ENCODE measurements at regions of chr11 and their contacts with region 1.

Region 1: GRCh38 chr11:36249246-36249645 is 40.0 kb downstream of the COMMD9 start:
- DNase-seq: no peak
- H3K4me3 Mint-ChIP-seq: no peak overlapping the region
- H3K27ac Mint-ChIP-seq: no peak overlapping the region
- H3K4me1 Mint-ChIP-seq: no peaks in the 10 kb centered on the region
- H3K27me3 Mint-ChIP-seq: peaks cover 29% of the 10 kb centered on the region

Region 2: DNA sequence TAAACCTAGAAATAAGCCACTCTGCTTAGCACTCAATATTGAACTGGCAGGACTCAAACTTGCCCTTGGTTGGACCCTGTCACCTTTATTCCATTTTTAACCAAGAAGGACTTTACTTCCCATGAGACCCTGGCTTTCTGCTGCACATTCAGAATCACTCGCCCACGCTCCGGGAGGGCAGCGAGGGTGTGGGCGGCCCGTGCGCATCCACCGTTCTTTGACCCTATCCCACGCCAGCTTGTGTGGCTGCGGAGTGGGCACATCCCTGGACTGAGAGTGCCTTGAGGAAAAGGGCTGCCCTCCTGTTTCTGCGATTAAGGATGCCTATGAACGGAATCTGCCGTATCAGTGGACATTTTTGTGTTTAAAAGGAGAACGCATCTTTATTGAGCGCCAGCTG is 547.1 kb before region 1 on chr11:
- CTCF ChIA-PET with region 1: no interaction called
- intact Hi-C with region 1: no loop called
- DNase-seq: no peak
- H3K4me3 Mint-ChIP-seq: no peak overlapping the region
- H3K27ac Mint-ChIP-seq: no peak overlapping the region
- H3K4me1 Mint-ChIP-seq: peaks cover 2% of the 10 kb centered on the region
- H3K27me3 Mint-ChIP-seq: no peaks in the 10 kb centered on the region

Region 3: DNA sequence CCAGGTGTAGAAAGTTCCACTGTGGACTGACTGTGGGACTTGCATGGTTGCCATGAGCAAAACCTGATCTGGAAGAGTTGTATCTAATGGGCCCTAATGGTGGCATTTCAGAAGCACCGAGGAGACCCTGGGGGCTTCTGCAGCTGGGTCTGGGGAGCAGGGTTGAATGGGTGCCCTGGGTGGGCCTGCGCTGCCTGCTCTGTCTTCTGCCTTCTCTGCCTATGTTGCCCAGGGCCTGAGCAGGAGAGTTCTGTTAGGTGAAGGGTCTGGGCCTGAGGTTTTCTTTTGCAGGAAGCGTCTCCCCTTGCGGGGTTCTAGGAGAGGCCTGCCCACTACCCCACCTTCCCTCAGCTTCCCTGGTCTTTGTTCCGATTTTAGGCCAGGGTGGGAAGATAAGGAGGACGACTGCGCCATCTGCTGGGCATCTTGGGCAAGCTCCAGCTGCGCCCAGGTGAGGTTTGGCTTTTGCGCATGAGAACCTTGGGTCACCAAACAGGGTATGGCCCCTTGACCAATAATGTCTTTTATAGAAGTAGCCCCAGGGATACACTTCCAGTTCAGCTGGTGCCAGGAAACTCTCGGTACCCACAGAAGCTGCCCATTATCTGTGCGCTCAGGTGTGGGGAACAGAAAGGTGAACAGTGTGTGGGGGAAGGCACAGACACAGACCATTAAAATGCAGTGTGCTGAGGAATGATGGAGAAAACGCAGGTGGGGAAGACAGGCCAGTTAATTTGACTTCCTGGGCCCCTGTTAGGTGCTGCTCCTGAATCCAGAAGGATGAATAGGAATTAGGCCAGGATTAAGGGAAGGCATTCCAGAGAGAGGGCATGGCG is 16.8 kb after region 1 on chr11:
- CTCF ChIA-PET with region 1: interaction called, 20 read pairs
- intact Hi-C with region 1: no loop called
- DNase-seq: peak; percentile 74
- H3K4me3 Mint-ChIP-seq: no peak overlapping the region
- H3K27ac Mint-ChIP-seq: no peak overlapping the region
- H3K4me1 Mint-ChIP-seq: no peaks in the 10 kb centered on the region
- H3K27me3 Mint-ChIP-seq: peaks cover 1% of the 10 kb centered on the region